ENCODE measurements at regions of chr4 and their contacts with region 1.

Region 1: DNA sequence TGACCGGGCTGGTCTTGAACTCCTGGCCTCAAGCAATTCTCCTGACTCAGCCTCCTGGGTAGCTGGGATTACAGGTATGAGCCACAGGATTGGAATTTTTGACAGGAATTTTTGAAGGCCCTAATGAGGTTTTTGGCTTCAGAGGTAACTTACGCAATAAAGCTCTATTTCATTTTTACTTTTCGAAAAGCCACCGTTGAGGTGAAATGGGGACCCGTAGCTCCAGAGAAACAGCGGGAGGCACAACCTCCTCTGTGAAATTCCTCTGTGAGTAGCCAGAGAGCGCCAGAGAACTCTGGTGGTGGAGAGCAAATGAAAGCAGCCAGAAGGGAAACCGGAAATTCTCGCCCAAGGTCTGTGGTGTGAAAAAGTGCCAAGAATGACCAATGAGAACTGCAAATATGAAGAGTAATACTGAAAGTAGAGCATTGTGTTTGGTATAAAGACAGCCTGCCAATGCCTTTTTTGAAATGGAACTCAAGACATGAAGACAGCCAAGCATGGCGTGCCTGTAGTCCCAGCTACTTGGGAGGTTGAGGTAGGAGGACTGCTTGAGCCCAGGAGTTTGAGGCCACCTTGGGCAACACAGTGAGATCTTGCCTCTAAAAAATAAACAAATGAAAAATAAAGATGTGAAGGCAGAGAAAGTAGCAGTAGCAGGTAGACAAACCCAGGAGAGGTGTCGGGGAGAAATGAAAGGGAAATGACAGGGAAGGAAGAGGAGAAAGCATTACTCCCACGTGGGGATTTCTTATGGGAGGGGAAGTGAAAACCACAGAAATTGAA is 33.0 kb upstream of the TMEM131L start:
- DNase-seq: peak; percentile 87
- H3K4me3 Mint-ChIP-seq: peak overlapping the region; percentile 72
- H3K27ac Mint-ChIP-seq: peak overlapping the region; percentile 97
- H3K4me1 Mint-ChIP-seq: peaks cover 78% of the 10 kb centered on the region
- H3K27me3 Mint-ChIP-seq: no peaks in the 10 kb centered on the region

Region 2: DNA sequence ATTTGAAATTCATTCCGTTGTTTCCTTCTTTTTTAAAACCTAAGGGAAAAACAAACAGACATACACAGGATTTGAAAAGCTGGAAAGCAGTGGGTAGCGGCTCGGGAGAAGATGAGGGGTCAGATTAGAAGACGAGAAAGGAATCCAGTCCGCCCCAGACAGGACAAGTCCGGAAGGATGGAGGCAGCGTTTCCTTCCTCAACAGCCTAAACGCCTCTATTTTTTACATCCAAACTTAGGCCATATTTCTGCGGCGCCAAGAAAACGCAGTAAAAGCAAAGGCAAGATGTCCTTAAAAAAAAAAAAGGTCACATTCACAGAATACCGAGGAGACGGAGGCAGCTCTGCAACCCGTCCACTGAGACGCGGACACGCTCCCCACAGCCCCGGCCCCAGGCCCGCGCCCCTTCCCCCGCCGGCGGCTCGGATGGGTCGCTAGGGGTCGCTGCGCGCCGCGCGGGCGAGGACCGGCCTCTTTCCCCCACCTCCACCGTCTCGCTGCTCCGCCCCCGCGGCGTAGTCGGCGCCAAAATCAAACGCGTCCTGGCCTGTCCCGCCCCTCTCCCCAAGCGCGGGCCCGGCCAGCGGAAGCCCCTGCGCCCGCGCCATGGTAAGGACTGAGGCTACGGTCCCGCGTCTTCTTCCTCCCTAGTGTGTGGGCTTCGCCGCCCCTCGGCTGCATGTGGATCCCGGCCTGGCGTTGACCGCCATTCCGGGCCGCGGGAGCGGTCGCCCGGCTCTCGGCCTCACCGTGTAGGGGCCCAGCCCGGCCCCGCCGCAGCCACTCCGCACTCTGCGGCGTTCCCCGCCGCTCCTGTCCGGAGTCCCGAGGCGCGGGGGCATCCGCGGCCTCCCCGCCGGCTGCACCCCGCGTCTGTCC is 88.8 kb before region 1 on chr4 and contains the start of gene MND1:
- CTCF ChIA-PET with region 1: interaction called, 27 read pairs
- DNase-seq: peak; percentile 94
- H3K4me3 Mint-ChIP-seq: peak within 1 kb of the TSS; percentile 90
- H3K27ac Mint-ChIP-seq: peak within 1 kb of the TSS; percentile 91
- H3K4me1 Mint-ChIP-seq: peaks cover 51% of the 10 kb centered on the region
- H3K27me3 Mint-ChIP-seq: peaks cover 20% of the 10 kb centered on the region

Region 3: GRCh38 chr4:153385784-153386183 is 47.4 kb before region 1 on chr4:
- CTCF ChIA-PET with region 1: no interaction called
- DNase-seq: no peak
- H3K4me3 Mint-ChIP-seq: no peak overlapping the region
- H3K27ac Mint-ChIP-seq: no peak overlapping the region
- H3K4me1 Mint-ChIP-seq: no peaks in the 10 kb centered on the region
- H3K27me3 Mint-ChIP-seq: no peaks in the 10 kb centered on the region

Region 4: GRCh38 chr4:153466081-153466948 is 33.2 kb after region 1 on chr4 and contains the start of gene TMEM131L:
- CTCF ChIA-PET with region 1: interaction called, 40 read pairs
- DNase-seq: peak; percentile 75
- H3K4me3 Mint-ChIP-seq: peak within 1 kb of the TSS; percentile 96
- H3K27ac Mint-ChIP-seq: peak within 1 kb of the TSS; percentile 95
- H3K4me1 Mint-ChIP-seq: peaks cover 47% of the 10 kb centered on the region
- H3K27me3 Mint-ChIP-seq: peaks cover 4% of the 10 kb centered on the region

Region 5: GRCh38 chr4:153488006-153488891 is 55.1 kb after region 1 on chr4:
- CTCF ChIA-PET with region 1: interaction called, 16 read pairs
- DNase-seq: peak; percentile 76
- H3K4me3 Mint-ChIP-seq: peak overlapping the region; percentile 59
- H3K27ac Mint-ChIP-seq: peak overlapping the region; percentile 89
- H3K4me1 Mint-ChIP-seq: peaks cover 78% of the 10 kb centered on the region
- H3K27me3 Mint-ChIP-seq: no peaks in the 10 kb centered on the region

Region 6: GRCh38 chr4:153521999-153522801 is 89.0 kb after region 1 on chr4:
- CTCF ChIA-PET with region 1: interaction called, 11 read pairs
- DNase-seq: peak; percentile 80
- H3K4me3 Mint-ChIP-seq: peak overlapping the region; percentile 66
- H3K27ac Mint-ChIP-seq: peak overlapping the region; percentile 97
- H3K4me1 Mint-ChIP-seq: peaks cover 95% of the 10 kb centered on the region
- H3K27me3 Mint-ChIP-seq: no peaks in the 10 kb centered on the region

Region 7: GRCh38 chr4:153643406-153644383 is 210.5 kb after region 1 on chr4:
- CTCF ChIA-PET with region 1: interaction called, 13 read pairs
- DNase-seq: no peak
- H3K4me3 Mint-ChIP-seq: no peak overlapping the region
- H3K27ac Mint-ChIP-seq: no peak overlapping the region
- H3K4me1 Mint-ChIP-seq: peaks cover 19% of the 10 kb centered on the region
- H3K27me3 Mint-ChIP-seq: no peaks in the 10 kb centered on the region

Region 8: DNA sequence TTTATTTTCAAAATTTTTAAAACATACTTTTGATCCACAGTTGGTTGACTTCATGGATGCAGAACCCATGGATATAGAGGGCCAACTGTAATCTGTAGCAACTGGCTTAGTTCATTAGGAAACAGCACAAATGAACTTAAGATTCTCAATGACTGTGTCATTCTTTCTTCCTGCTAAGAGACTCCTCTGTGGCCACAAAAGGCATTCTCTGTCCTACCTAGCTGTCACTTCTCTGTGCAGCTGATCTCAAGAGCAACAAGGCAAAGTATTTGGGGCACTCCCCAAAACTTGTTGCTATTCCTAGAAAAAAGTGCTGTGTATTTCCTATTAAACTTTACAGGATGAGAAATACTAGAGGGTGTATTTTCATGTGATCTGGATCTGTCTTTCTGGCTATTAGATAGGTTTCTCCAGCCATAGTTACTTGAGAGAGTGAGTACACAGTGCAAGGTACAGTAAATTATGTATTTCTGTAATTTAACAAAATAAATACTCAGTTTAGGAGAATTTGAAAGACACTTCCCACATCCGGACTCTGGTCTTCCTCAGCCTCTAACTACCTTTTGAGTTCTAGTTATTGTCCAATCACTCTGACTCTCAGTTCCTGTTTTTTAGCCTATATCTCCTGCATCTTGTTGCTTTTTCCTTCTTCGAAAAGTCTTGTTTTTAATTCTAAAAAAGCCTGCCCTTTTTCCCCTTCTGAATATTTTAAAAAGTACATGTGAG is 272.7 kb after region 1 on chr4:
- CTCF ChIA-PET with region 1: no interaction called
- DNase-seq: no peak
- H3K4me3 Mint-ChIP-seq: no peak overlapping the region
- H3K27ac Mint-ChIP-seq: peak overlapping the region; percentile 80
- H3K4me1 Mint-ChIP-seq: peaks cover 37% of the 10 kb centered on the region
- H3K27me3 Mint-ChIP-seq: no peaks in the 10 kb centered on the region

Measured in activated naive CD4-positive, alpha-beta T cell treated with anti-CD3 and anti-CD28 coated beads, Interleukin-2, amount 10 ng/mL, durations not matched to agents 7 days and 5 days (primary cell).